Ovary (tissue), 10 donors: ENCODE measurements at regions of chr2 and their contacts with region 1.

Region 1: GRCh38 chr2:15456352-15456751 is 104.8 kb downstream of the NBAS start:
- DNase-seq: no peak
- H3K4me3 ChIP-seq: no peak overlapping the region
- H3K27ac ChIP-seq: no peak overlapping the region
- H3K4me1 ChIP-seq: no peaks in the 10 kb centered on the region
- H3K27me3 ChIP-seq: no peaks in the 10 kb centered on the region
- CTCF ChIP-seq: no peak
- EP300 ChIP-seq: no peak
- POLR2A ChIP-seq: no peak

Region 2: DNA sequence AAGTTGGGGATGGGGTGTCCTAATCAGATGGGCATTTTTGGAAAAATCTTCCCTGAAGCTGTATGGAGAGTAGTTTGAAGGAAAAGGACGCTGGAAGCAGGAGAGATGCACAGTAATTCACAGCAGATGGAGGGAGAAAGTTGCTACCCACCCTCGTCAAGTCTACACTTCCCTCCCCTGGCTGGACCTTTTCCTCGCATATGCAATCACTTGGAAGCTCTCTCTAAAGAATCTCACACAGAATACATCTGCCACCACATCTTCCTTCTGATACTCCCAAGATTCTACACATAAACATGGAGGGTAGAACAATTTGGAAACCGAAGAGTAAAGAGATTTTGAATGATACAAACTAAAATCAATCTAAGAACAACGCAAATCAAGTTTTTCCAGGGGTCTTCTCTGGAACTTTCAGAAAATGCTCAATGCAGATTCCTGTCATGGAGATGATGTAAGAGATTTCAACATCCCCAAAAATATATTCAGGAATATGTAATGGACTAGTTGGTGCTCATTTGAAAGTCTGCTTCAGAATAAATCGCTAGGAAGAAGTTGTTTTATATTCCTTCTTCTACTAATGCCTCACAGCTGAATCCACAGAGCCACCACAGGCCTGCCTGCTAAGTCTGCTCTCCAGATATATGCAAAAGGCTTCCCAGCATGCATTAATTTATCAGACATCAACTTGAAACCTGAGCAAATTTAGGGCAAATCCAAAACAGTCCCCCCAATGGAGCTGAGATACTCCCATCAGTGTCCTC is 532.4 kb before region 1 on chr2:
- intact Hi-C with region 1: loop called in 1 of 4 experiments (anchors 5 kb)
- DNase-seq: no peak
- H3K4me3 ChIP-seq: no peak overlapping the region
- H3K27ac ChIP-seq: no peak overlapping the region
- H3K4me1 ChIP-seq: no peaks in the 10 kb centered on the region
- H3K27me3 ChIP-seq: no peaks in the 10 kb centered on the region
- CTCF ChIP-seq: no peak
- EP300 ChIP-seq: no peak
- POLR2A ChIP-seq: no peak